ENCODE measurements at regions of chr10 and their contacts with region 1.

Region 1: DNA sequence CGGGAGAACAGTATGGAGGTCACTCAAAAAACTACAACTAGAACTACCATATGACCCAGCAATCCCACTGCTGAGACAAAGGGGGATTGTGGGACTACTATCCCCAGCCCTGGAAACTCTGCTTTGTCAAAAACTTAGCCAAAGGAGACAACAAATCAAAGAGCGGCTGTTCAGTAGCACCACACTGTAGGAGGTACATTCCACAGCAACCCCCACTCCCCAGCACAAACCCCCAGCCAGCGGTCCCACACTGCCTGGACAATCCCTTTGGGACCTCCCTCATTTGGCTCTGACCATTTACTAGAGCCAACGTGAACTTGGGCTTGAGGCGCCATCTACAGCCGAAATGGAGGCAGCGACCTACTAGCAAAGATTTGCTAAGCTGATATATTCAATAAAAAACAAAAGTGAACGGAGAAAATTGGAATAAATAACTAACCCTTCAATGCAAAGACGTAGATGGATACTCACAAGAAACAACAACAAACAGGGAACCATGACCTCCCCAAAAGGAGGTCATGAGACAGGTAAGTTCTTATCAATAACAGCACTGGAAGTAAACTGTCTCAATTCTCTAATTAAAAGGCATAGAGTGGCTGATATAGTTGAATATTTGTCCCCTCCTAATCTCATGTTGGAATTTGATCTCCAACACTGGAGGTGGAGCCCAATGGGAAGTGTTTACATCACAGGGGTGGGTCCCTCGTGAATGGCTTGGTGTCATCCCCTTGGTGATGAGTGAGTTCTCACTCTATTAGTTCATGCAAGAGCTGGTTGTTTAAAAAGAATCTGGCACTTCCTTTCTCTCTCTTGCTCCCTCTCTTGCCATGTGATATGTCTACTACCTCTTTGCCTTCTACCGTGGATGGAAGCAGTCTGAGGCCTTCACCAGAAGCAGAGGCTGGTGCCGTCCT is 119.0 kb upstream of the KCNMA1 start:
- DNase-seq: peak; percentile 74
- ATAC-seq: peak; percentile 97
- H3K4me3 ChIP-seq: no peak overlapping the region
- H3K27ac ChIP-seq: no peak overlapping the region
- H3K4me1 ChIP-seq: no peaks in the 10 kb centered on the region
- H3K27me3 ChIP-seq: no peaks in the 10 kb centered on the region
- CTCF ChIP-seq: peak; percentile 93
- POLR2A ChIP-seq: 0 out of 2 replicates have a peak, but pooled peaks have one; percentile 35
- RAD21 ChIP-seq: peak; percentile 93

Region 2: DNA sequence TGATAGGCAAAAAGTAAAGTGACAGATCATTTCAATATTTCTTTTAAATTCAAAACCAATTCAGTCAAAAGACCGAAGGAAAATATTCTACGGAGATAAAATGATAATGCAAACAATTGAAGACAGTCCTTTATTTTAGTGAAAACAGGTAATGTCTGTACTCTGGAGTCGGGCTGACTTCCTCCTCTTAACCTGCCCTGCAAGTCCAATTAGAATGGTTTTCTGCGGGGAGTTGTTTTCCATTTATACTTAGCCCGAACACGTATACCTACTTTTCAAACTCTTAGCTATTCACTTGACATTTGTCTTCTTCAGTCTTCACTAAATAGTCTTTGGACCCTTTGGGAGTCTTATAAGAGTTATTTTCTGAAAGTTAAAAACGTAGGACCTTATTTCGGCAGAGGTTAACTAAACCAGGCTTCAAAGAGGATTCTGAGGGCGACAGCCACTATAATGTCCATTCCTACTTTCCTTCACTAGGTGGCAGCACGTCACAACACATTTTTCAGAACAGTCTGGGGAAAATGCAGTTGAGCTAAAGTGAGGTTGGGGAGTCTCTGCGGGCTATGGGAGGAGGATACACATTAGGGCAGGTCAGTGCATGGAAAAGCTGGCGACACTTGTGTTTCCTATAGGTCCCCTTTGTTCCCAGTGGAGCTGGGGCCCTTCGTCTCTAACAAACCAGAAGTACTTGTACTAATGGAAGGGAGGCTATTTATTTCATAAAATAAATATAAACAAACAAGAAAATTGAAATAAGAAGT is 590.9 kb before region 1 on chr10:
- CTCF ChIA-PET with region 1: no interaction called
- POLR2A ChIA-PET with region 1: no interaction called
- dilution Hi-C with region 1: no loop called
- in situ Hi-C with region 1: no loop called
- intact Hi-C with region 1: loop called (anchors 2 kb)
- DNase-seq: peak; percentile 71
- ATAC-seq: peak; percentile 55
- H3K4me3 ChIP-seq: no peak overlapping the region
- H3K27ac ChIP-seq: no peak overlapping the region
- H3K4me1 ChIP-seq: peaks cover 15% of the 10 kb centered on the region
- H3K27me3 ChIP-seq: no peaks in the 10 kb centered on the region
- CTCF ChIP-seq: peak; percentile 82
- POLR2A ChIP-seq: no peak
- RAD21 ChIP-seq: peak; percentile 86

Region 3: DNA sequence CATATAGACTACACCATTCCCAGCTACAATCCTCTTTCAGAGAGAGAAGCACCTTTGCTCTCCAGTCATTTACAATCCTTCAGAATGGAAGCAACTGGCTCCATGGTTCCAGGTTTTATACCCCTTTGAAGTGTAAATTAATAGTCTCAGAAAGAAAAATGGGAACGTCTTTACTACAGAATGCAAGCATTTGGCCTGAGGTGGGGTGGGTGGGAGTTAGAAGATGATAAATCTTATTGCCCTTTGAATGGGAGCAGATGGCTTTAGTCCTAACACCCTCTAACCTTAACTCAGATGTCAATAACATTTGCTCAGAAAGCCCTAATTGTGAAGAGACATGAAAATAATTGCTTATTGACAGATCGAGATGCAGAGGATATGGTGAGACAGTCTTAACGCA is 34.8 kb before region 1 on chr10:
- CTCF ChIA-PET with region 1: interaction called, 4 read pairs
- POLR2A ChIA-PET with region 1: no interaction called
- dilution Hi-C with region 1: no loop called
- in situ Hi-C with region 1: loop called (anchors 5 kb)
- intact Hi-C with region 1: loop called (anchors 1 kb)
- DNase-seq: no peak
- ATAC-seq: no peak
- H3K4me3 ChIP-seq: no peak overlapping the region
- H3K27ac ChIP-seq: no peak overlapping the region
- H3K4me1 ChIP-seq: no peaks in the 10 kb centered on the region
- H3K27me3 ChIP-seq: no peaks in the 10 kb centered on the region
- CTCF ChIP-seq: no peak
- POLR2A ChIP-seq: no peak
- RAD21 ChIP-seq: no peak

Region 4: GRCh38 chr10:77820349-77820748 is 63.8 kb after region 1 on chr10:
- CTCF ChIA-PET with region 1: no interaction called
- POLR2A ChIA-PET with region 1: no interaction called
- dilution Hi-C with region 1: no loop called
- in situ Hi-C with region 1: no loop called
- intact Hi-C with region 1: no loop called
- DNase-seq: peak; percentile 22
- ATAC-seq: no peak
- H3K4me3 ChIP-seq: no peak overlapping the region
- H3K27ac ChIP-seq: no peak overlapping the region
- H3K4me1 ChIP-seq: no peaks in the 10 kb centered on the region
- H3K27me3 ChIP-seq: no peaks in the 10 kb centered on the region
- CTCF ChIP-seq: no peak
- POLR2A ChIP-seq: no peak
- RAD21 ChIP-seq: no peak

Measured in IMR-90 (cell line).